CD8-positive, alpha-beta T cell (primary cell): ENCODE measurements at regions of chr10 and their contacts with region 1.

Region 1: DNA sequence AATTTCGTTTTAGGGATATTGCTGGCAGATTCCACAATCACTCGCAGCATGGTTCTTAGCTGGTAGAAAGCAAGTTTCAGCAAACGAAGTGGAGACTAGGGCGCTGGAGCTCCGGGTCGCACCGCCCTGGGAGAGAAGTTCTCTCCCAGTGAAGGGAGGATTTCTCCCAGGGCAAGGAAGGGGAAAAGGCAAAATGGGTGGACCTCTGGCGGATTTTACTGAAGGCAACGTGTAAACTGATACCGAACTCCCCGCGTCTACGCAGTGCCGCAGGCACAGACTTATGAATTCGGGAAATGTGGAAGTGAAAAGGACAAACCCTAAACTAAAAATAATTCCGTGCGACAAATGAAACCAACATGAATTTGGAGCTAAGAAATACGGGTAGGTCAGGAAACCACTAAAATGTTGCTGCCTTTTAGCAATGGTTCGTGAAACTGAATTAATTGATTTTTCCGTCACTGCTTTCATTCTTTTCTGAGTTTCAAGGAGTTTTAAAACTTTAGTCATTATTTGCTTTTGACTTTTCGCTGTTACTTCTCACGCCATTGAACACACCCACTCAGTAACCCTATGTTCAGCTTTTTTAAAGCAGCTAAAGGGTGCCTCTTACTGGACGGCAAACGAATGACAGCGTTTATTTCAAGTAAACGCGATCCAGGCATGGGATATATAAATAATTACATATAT is at the start of gene MYOF:
- DNase-seq: peak; percentile 10 to 79 (median 34)
- ATAC-seq: peak; percentile 95
- H3K4me3 ChIP-seq: peak within 1 kb of the TSS; percentile 38 to 44
- H3K4me3 Mint-ChIP-seq: peak within 1 kb of the TSS; percentile 84
- H3K27ac ChIP-seq: no peak within 1 kb of the TSS
- H3K27ac Mint-ChIP-seq: no peak within 1 kb of the TSS
- H3K4me1 ChIP-seq: peaks cover 6% of the 10 kb centered on the region
- H3K4me1 Mint-ChIP-seq: peaks cover 6% of the 10 kb centered on the region
- H3K27me3 ChIP-seq: peaks cover 3 to 10% of the 10 kb centered on the region in 2 experiments
- H3K27me3 Mint-ChIP-seq: peaks cover 31% of the 10 kb centered on the region
- CTCF ChIP-seq: peak; percentile 81
- total RNA-seq, gene MYOF: not detected

Region 2: DNA sequence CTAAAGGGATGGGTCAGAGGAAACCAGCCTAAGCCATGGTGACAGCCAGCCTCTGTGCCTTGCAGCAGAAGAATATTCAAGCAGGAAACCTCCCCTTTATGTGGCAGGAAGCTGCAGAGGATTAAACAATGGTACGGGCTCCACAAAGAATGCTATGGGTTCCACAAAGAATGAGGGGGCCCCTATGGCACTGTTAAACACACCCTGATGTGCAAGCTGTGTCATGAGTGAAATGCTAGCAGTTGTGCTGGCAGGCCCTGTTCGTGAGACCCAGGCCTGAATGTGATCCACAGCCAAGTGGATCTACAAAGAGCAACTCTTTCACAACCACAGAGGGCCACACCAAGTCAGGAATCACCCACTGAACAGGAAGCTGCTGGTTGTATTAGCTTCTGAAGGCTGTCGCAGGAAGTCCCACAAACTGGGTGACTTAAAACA is 69.0 kb before region 1 on chr10:
- CTCF ChIA-PET with region 1: interaction called, 16 read pairs
- POLR2A ChIA-PET with region 1: interaction called, 3 read pairs
- intact Hi-C with region 1: no loop called
- DNase-seq: peak; percentile 1 to 71 (median 29)
- ATAC-seq: peak; percentile 81
- H3K4me3 ChIP-seq: no peak overlapping the region
- H3K4me3 Mint-ChIP-seq: peak overlapping the region; percentile 59
- H3K27ac ChIP-seq: peak overlapping the region; percentile 2 to 74
- H3K27ac Mint-ChIP-seq: peak overlapping the region; percentile 78
- H3K4me1 ChIP-seq: peaks cover 63% of the 10 kb centered on the region
- H3K4me1 Mint-ChIP-seq: peaks cover 65% of the 10 kb centered on the region
- H3K27me3 ChIP-seq: no peaks in the 10 kb centered on the region
- H3K27me3 Mint-ChIP-seq: no peaks in the 10 kb centered on the region
- CTCF ChIP-seq: no peak

Region 3: GRCh38 chr10:93461807-93462178 is 20.5 kb before region 1 on chr10:
- CTCF ChIA-PET with region 1: interaction called, 13 read pairs
- POLR2A ChIA-PET with region 1: no interaction called
- intact Hi-C with region 1: no loop called
- DNase-seq: no peak
- ATAC-seq: no peak
- H3K4me3 ChIP-seq: no peak overlapping the region
- H3K4me3 Mint-ChIP-seq: no peak overlapping the region
- H3K27ac ChIP-seq: no peak overlapping the region
- H3K27ac Mint-ChIP-seq: no peak overlapping the region
- H3K4me1 ChIP-seq: no peaks in the 10 kb centered on the region
- H3K4me1 Mint-ChIP-seq: peaks cover 4% of the 10 kb centered on the region
- H3K27me3 ChIP-seq: no peaks in the 10 kb centered on the region
- H3K27me3 Mint-ChIP-seq: peaks cover 4% of the 10 kb centered on the region
- CTCF ChIP-seq: no peak

Region 4: DNA sequence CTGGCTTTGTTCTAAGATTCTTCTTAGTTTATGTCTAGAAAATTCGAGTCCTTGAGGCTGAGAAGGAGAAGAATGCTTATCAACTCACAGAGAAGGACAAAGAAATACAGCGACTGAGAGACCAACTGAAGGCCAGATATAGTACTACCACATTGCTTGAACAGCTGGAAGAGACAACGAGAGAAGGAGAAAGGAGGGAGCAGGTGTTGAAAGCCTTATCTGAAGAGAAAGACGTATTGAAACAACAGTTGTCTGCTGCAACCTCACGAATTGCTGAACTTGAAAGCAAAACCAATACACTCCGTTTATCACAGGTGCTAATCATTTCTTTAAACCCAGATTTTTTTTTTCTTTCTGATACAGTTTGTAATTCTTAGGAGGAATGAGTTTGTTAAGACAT is 20.8 kb after region 1 on chr10:
- CTCF ChIA-PET with region 1: interaction called, 33 read pairs
- POLR2A ChIA-PET with region 1: no interaction called
- intact Hi-C with region 1: no loop called
- DNase-seq: peak in 1 of 9 experiments; percentile 22
- ATAC-seq: no peak
- H3K4me3 ChIP-seq: no peak overlapping the region
- H3K4me3 Mint-ChIP-seq: peak overlapping the region; percentile 46
- H3K27ac ChIP-seq: no peak overlapping the region
- H3K27ac Mint-ChIP-seq: peak overlapping the region; percentile 53
- H3K4me1 ChIP-seq: no peaks in the 10 kb centered on the region
- H3K4me1 Mint-ChIP-seq: peaks cover 5% of the 10 kb centered on the region
- H3K27me3 ChIP-seq: no peaks in the 10 kb centered on the region
- H3K27me3 Mint-ChIP-seq: no peaks in the 10 kb centered on the region
- CTCF ChIP-seq: no peak

Region 5: GRCh38 chr10:93515071-93516005 is 33.0 kb after region 1 on chr10:
- CTCF ChIA-PET with region 1: interaction called, 33 read pairs
- POLR2A ChIA-PET with region 1: no interaction called
- intact Hi-C with region 1: no loop called
- DNase-seq: no peak
- ATAC-seq: no peak
- H3K4me3 ChIP-seq: no peak overlapping the region
- H3K4me3 Mint-ChIP-seq: no peak overlapping the region
- H3K27ac ChIP-seq: no peak overlapping the region
- H3K27ac Mint-ChIP-seq: no peak overlapping the region
- H3K4me1 ChIP-seq: no peaks in the 10 kb centered on the region
- H3K4me1 Mint-ChIP-seq: no peaks in the 10 kb centered on the region
- H3K27me3 ChIP-seq: no peaks in the 10 kb centered on the region
- H3K27me3 Mint-ChIP-seq: peaks cover 2% of the 10 kb centered on the region
- CTCF ChIP-seq: no peak